OCI-LY7 (cell line): ENCODE measurements at regions of chr10 and their contacts with region 1.

Region 1: GRCh38 chr10:35153716-35154479 is 27.3 kb downstream of the CREM start:
- DNase-seq: no peak
- H3K4me3 ChIP-seq: no peak overlapping the region
- H3K27ac ChIP-seq: no peak overlapping the region
- H3K4me1 ChIP-seq: peaks cover 34% of the 10 kb centered on the region
- CTCF ChIP-seq: no peak

Region 2: GRCh38 chr10:35126530-35127296 is 27.2 kb before region 1 on chr10 and contains the start of gene CREM:
- CTCF ChIA-PET with region 1: interaction called, 3 read pairs
- POLR2A ChIA-PET with region 1: interaction called, 6 read pairs
- intact Hi-C with region 1: loop called (anchors 1 kb)
- DNase-seq: peak; percentile 98
- H3K4me3 ChIP-seq: peak within 1 kb of the TSS; percentile 93
- H3K27ac ChIP-seq: peak within 1 kb of the TSS; percentile 85
- H3K4me1 ChIP-seq: peaks cover 43% of the 10 kb centered on the region
- CTCF ChIP-seq: peak; percentile 82
- total RNA-seq, gene CREM: 31.9 and 38.1 TPM in 2 replicates

Region 3: DNA sequence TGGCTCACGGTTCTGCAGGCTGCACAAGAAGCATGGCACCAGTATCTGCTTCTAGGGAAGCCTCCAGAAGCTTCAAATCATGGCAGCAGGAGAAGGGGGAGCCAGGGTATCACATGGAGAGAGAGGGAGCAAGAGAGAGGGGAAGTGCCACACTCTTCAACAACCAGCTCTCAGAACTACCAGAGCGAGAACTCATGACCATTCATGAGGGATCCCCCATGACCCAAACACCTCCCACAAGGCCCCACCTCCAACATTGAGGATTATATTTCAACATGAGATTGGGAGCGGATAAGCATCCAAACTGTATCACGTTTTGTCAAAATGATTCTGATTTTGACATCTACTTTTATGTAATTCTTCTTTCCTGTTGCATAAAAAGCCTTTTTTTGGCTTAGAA is 11.2 kb after region 1 on chr10:
- CTCF ChIA-PET with region 1: interaction called, 3 read pairs
- POLR2A ChIA-PET with region 1: interaction called, 13 read pairs
- intact Hi-C with region 1: no loop called
- DNase-seq: no peak
- H3K4me3 ChIP-seq: no peak overlapping the region
- H3K27ac ChIP-seq: no peak overlapping the region
- H3K4me1 ChIP-seq: peaks cover 11% of the 10 kb centered on the region
- CTCF ChIP-seq: no peak